PC-3 (cell line): ENCODE measurements at regions of chr5 and their contacts with region 1.

Region 1: DNA sequence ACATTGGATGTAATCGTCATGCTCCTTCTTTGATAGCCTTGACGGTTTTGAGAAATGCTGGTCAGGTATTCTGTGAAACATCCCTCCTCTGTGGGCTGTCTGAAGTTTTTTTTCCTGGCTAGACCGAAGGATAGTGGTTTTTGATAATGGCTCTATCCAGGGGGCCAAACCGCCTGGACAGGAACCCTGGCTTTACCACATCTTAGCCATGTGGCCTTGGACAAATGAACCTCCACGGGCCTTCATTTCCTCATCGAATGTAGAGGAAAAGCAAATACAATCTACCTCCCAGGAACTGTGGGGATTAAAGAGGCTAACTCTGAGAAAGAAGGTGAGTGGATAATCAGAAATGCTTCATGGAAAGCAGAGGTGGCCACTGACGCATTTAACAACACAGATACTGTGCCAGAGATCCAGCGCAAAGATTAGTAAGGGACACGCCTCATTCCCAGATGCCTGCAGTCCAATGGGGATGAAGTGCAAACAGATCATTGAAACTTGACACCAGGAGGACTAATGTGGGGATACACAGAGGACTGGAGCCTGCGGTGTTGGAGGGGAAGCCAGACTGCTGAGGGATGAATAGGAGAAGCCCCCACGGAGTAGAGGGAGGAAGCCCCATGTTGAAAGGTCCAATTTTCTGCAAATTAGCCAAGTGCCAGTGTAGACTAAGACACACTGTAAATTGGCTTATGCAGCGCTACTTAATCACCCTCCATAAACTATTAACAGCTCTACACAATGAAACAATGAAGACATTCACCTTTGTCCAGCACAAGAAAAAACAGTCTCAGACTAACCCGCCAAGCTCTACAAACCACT is 41.6 kb downstream of the MYO10 start:
- DNase-seq: peak; percentile 100
- ATAC-seq: peak; percentile 77
- H3K4me3 ChIP-seq: peak overlapping the region; percentile 39
- H3K27ac ChIP-seq: peak overlapping the region; percentile 91
- H3K4me1 ChIP-seq: peaks cover 67% of the 10 kb centered on the region
- H3K27me3 ChIP-seq: no peaks in the 10 kb centered on the region
- CTCF ChIP-seq: no peak

Region 2: DNA sequence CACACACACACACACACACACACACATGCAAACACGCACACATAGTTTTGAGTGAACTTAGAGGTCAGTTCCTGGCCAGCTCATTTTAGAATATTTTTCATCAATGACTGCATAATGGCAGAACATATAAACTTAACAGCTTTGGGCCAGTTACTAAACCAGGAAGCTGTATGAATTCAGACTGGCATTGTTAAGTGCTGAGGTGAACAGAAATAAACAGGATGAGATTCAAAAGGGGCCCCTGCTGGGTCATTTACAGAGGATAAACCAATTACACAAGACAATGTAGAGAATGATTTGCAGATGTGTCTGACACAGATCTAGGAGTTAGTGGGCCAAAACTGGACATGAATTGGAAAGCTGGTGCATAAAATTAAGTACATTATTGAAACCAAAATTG is 759.4 kb before region 1 on chr5:
- CTCF ChIA-PET with region 1: no interaction called
- POLR2A ChIA-PET with region 1: no interaction called
- intact Hi-C with region 1: no loop called
- DNase-seq: no peak
- ATAC-seq: no peak
- H3K4me3 ChIP-seq: no peak overlapping the region
- H3K27ac ChIP-seq: no peak overlapping the region
- H3K4me1 ChIP-seq: no peaks in the 10 kb centered on the region
- H3K27me3 ChIP-seq: peaks cover 9% of the 10 kb centered on the region; the same call in 1 of the 2 replicates
- CTCF ChIP-seq: no peak

Region 3: GRCh38 chr5:16871746-16872339 is 22.6 kb before region 1 on chr5:
- CTCF ChIA-PET with region 1: no interaction called
- POLR2A ChIA-PET with region 1: no interaction called
- intact Hi-C with region 1: loop called (anchors 1 kb)
- DNase-seq: peak; percentile 80
- ATAC-seq: peak; percentile 40
- H3K4me3 ChIP-seq: no peak overlapping the region
- H3K27ac ChIP-seq: peak overlapping the region; percentile 79
- H3K4me1 ChIP-seq: peaks cover 24% of the 10 kb centered on the region
- H3K27me3 ChIP-seq: no peaks in the 10 kb centered on the region
- CTCF ChIP-seq: no peak